A549 (cell line): ENCODE measurements at regions of chr5 and their contacts with region 1.

Region 1: DNA sequence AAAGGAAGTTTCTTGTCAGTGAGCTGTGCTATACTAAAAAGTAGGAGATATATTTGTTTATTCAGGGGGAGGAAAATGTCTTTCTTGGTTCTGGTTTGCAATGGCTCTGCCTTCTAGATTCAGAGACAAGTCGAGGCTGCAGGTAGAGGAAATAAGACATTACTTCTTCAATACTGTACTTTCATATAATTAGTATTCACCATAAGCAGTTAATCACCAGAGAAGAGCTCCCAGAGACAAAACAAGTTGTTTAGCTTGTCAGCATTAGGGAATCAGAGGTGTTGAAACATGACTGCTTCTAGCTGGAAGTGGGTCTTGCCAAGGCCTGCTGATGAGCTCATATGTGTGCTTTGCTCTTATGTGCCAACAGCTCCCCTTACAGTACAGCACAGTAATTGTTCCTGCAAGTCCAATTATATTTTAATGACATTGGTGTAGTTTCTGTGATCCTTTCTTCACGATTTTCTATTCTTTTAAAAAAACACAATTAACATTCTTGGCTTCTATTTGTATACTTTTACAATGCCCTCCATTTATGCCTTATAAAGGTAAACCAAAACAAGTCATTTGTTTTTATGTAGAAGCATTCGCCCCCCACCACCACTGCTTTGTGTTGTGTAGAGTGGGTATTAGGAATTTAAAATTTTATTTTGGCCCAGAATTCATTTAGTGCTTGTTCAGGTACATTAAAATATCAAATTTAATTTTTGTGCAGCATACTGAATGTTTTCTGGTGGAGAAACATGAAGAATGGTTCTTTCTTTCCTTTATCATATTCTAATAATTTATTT is 112.2 kb downstream of the RPS23 start:
- DNase-seq: peak; percentile 71 to 93
- ATAC-seq: peak; percentile 89 to 91
- H3K4me3 ChIP-seq: no peak overlapping the region
- H3K27ac ChIP-seq: peak overlapping the region; percentile 88
- H3K4me1 ChIP-seq: peaks cover 36% of the 10 kb centered on the region
- CTCF ChIP-seq: peak; percentile 96
- EP300 ChIP-seq: no peak
- POLR2A ChIP-seq: no peak
- RAD21 ChIP-seq: peak; percentile 97 to 98

Region 2: DNA sequence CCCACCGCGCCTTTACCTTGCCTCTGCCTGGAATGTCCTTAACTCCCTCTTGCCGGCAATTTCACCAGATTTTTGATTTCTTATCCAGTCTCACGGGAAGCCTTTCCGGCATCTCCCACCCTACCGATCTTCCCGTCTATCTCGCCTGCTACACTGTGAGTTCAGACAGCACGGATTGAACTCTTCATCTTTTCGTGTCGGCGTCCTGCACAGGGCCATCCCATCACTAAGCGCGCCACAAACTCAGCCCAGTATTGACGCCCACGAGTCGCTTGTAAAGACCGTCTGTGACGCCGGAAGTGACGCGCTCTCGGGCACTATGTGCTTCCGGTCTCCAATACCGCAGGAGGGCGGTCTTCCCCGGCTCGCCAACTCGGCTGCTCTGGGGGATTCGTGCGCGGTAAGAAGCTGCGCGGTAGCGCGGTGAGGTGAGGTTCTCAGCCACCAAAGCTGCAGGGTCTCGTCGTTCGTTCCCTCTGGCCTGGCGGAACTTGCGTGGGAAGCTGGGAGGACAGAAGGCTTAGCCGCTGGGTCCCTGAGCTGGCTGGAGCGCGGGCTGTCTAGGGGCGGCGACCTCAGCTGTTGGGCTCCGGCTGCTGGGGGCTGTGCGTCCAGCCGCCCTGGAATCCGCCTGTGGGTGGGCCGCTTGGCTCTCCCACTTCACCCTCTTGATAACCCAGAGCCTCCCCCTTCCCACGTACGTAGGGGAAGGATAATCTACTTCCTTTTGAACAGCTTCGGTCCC is 864.5 kb before region 1 on chr5 and contains the start of gene ZCCHC9:
- CTCF ChIA-PET with region 1: interaction called, 3 read pairs
- POLR2A ChIA-PET with region 1: interaction called, 10 read pairs
- DNase-seq: peak; percentile 73 to 95
- ATAC-seq: peak; percentile 97 to 99
- H3K4me3 ChIP-seq: peak within 1 kb of the TSS; percentile 73
- H3K27ac ChIP-seq: peak within 1 kb of the TSS; percentile 86 to 99
- H3K4me1 ChIP-seq: peaks cover 23% of the 10 kb centered on the region
- CTCF ChIP-seq: no peak
- EP300 ChIP-seq: no peak
- POLR2A ChIP-seq: peak; percentile 94
- RAD21 ChIP-seq: no peak
- polyA plus RNA-seq, gene ZCCHC9: 27.3 and 44.4 TPM in 2 replicates

Region 3: DNA sequence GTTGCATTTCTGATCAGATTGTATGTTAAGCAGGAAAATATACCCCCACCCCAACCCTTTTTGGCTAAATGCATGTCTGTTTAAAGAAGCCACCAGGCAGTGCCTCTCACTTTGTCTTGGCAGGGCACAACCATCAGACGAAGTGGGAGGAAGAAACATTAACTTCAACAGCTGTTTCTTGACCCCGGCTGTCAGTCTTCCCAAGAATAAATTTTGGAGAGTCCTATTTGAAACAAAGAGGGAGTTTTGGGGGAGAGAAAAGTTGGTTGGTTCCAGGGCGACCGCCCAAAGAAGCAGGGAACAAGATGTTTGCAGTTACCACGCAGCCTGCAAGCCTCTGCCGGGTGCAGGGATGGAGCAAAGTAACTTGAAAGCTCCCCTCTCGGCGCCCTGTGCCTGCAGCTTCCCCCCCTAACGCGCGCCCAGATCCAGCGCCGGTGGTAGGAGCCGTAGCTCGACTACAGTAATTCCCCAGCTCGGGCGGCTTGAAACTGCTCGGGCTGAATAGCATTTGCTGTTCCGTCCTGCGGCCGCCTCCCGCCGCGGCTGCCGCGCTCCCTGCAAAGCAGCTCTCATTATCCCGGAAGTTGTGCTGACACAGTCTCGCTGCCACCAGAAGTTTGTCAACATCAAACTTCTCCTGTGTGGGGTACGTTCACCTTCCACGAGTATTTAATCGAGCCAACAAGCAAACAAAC is 314.3 kb before region 1 on chr5:
- CTCF ChIA-PET with region 1: interaction called, 20 read pairs
- POLR2A ChIA-PET with region 1: interaction called, 43 read pairs
- DNase-seq: peak; percentile 89 to 92
- ATAC-seq: peak; percentile 93 to 94
- H3K4me3 ChIP-seq: peak overlapping the region; percentile 44
- H3K27ac ChIP-seq: peak overlapping the region; percentile 92 to 95
- H3K4me1 ChIP-seq: peaks cover 49% of the 10 kb centered on the region
- CTCF ChIP-seq: no peak
- EP300 ChIP-seq: peak; percentile 15 to 58; a peak in 1 of 5 replicates
- POLR2A ChIP-seq: no peak
- RAD21 ChIP-seq: peak; percentile 49 to 76

Region 4: DNA sequence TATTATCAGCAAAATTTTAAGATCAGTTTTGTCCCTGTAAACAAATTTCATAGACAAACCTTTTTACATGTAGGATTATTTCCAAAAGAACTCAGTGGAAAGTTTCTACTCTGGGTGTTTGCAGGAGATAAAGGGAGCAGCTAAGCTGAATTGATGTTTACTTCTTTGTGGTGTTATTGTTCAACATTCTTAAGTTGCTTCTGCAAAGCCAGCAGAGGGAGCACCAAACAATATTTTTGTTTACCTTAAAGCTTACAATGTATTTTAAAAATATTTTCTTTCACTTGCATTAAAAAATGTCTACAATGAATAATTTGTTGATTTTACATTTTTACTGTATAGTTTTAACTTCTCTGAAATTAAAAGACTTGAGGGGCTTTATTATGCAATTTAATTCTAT is 58.7 kb before region 1 on chr5:
- CTCF ChIA-PET with region 1: interaction called, 36 read pairs
- POLR2A ChIA-PET with region 1: interaction called, 6 read pairs
- DNase-seq: peak; percentile 3 to 40
- ATAC-seq: peak in 1 of 2 experiments; percentile 52; a peak in 1 of 6 replicates
- H3K4me3 ChIP-seq: no peak overlapping the region
- H3K27ac ChIP-seq: no peak overlapping the region
- H3K4me1 ChIP-seq: peaks cover 32% of the 10 kb centered on the region
- CTCF ChIP-seq: peak; percentile 63
- EP300 ChIP-seq: no peak
- POLR2A ChIP-seq: no peak
- RAD21 ChIP-seq: peak; percentile 61 to 69

Region 5: GRCh38 chr5:82225525-82226172 is 59.7 kb after region 1 on chr5:
- CTCF ChIA-PET with region 1: interaction called, 16 read pairs
- POLR2A ChIA-PET with region 1: interaction called, 3 read pairs
- DNase-seq: peak; percentile 41 to 62
- ATAC-seq: peak; percentile 93 to 98
- H3K4me3 ChIP-seq: no peak overlapping the region
- H3K27ac ChIP-seq: no peak overlapping the region
- H3K4me1 ChIP-seq: no peaks in the 10 kb centered on the region
- CTCF ChIP-seq: peak; percentile 90
- EP300 ChIP-seq: no peak
- POLR2A ChIP-seq: no peak
- RAD21 ChIP-seq: peak; percentile 87 to 93

Region 6: DNA sequence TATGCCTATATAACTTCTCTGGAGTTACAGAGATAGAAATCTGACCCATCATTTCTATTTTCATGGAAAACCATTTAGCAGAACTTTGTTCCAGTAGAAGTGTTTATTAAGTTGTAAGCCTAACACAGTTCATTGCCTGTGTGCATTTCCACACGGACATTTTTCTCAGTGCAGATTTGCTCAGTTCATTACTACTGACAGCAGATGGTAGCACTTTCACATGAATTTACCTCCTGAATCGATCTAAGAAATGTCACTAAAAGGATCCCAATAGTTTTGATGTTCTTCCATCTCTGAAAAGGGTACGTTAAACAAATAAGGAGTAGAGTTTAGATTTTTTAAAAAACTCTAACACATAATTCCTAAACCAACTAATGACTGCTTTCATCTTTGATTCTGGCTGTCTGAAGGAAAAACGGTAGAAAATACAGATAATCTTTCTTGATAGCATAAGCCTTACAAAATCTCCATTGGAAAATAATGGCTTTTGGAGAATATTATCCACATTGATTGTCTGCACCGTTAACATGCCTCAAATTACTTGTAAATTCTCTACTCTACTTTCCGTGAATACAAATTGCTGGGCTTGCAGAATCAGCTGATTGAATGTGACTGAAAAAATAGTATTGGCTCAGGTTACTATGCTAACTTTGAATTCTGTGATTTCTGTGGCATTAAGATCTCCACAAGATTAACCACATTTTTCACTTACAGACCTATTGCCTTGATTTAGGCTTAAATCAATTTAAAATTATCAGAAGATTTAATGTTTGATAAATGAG is 79.1 kb after region 1 on chr5:
- CTCF ChIA-PET with region 1: no interaction called
- POLR2A ChIA-PET with region 1: no interaction called
- DNase-seq: no peak
- ATAC-seq: no peak
- H3K4me3 ChIP-seq: no peak overlapping the region
- H3K27ac ChIP-seq: no peak overlapping the region
- H3K4me1 ChIP-seq: no peaks in the 10 kb centered on the region
- CTCF ChIP-seq: no peak
- EP300 ChIP-seq: no peak
- POLR2A ChIP-seq: no peak
- RAD21 ChIP-seq: peak in 1 of 2 experiments; percentile 11; a peak in 1 of 5 replicates